ENCODE measurements at regions of chr12 and their contacts with region 1.

Region 1: DNA sequence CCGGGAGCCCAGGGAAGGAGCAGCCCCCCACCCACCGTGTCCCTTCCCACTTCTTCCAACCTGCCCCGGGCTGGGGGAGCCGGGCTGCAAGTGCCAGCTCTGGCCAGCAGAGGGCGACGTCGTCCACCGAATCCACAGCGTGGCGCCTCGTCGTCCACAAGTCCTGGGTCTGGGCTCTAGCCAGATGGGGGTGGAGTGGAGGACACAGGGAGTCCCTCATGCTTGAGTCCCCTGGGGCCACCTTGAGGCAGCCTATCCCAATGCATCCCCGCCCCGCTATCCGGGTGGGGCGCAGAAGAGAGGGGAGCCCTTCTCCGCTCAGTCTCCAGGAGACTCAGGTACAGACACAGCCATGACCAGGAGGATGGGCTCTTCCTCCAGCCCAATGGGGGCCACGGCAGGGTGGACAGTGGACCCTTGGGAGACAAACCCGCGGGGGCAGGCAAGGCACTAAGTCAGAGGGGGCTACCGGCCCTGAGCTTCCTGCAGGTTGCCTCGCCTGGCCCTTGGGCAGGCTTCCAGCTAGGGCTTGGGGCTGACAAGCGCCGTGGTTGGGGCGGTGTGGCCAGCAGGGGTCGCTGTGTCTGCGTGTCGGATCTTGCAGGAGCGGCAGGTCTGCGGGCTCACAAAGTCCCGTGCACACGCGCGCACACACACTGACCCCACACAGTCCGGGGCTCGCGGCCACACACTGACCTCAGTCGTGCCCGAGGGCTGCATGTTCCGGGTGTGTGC is 5.5 kb downstream of the AQP5 start:
- DNase-seq: peak; percentile 82
- H3K27ac ChIP-seq: no peak overlapping the region
- CTCF ChIP-seq: peak; percentile 92

Region 2: GRCh38 chr12:49855005-49855404 is 112.2 kb before region 1 on chr12:
- CTCF ChIA-PET with region 1: no interaction called
- POLR2A ChIA-PET with region 1: no interaction called
- DNase-seq: no peak
- H3K27ac ChIP-seq: no peak overlapping the region
- CTCF ChIP-seq: no peak

Region 3: GRCh38 chr12:50055831-50056638 is 88.8 kb after region 1 on chr12:
- CTCF ChIA-PET with region 1: interaction called, 18 read pairs
- POLR2A ChIA-PET with region 1: no interaction called
- DNase-seq: peak; percentile 79
- H3K27ac ChIP-seq: peak overlapping the region; percentile 15; the same call in 1 of the 2 replicates
- CTCF ChIP-seq: peak; percentile 96

Measured in RWPE1 (cell line).